Right ventricle myocardium inferior (tissue), 1 donor: ENCODE measurements at regions of chr3 and their contacts with region 1.

Region 1: DNA sequence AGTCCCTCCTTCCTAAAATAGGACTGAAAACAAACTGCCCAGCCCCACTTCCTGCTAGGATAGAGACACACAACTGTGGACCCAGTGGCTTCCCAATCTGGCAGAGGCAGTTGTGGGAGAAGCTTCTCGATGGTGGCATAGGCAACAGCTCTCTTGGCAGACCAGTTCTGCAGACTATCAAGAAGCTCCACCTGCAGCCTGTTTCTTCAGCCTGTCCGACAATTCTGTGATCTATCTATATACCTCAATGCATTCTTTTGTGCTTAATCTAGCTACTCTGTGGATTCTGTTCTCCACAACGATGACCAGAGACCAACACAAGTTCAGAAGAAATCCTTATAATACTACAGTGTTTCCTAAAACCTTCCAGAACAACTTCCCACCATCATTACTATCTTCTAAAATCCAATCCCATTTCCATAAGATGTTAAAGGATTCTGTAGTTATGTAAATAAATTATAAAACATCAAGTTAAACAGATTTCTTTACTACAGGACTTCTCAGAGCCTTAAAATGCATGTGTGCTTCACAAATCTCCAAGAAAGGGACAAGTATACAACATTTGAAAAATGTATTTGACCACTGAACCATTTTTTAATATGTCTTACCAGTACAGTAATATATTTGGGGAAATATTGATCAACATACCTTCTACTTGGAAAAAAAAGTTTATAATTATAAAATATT is 57.7 kb downstream of the IGF2BP2 start:
- DNase-seq: no peak
- ATAC-seq: no peak

Region 2: GRCh38 chr3:185659942-185660921 is 106.9 kb before region 1 on chr3:
- intact Hi-C with region 1: loop called (anchors 5 kb)
- DNase-seq: peak; percentile 87
- ATAC-seq: peak; percentile 62

Region 3: DNA sequence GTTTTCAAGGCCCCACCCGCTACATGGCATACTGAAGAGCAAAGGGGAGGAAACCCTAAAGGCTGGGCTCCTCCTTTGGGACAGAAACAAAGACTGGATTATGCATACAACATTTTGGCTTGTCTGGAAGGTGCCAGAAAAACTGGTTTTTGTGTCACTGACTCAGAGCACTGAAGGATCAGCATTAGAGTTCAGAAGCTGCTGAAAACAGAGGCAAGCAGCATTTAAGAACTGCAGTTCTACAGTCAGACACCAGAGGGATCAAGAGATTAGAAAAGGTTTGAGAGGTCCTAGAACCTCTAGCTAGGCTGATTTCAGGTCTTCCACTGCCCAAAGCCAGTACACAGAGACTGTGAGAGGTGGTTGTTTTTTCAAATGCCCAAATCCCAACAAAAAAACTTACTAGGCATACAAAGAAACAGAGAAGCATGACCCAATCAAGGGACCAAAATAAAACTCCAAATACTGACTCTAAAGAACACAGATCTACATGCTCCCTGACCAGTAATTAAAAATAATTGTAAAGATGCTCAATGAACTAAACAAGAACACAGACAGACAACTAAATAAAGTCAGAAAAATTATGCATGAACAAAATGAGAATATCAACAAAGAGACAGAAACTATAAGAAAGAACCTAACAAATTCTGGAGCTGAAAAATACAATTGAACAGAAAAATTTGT is 89.9 kb before region 1 on chr3:
- intact Hi-C with region 1: loop called (anchors 5 kb)
- DNase-seq: no peak
- ATAC-seq: no peak

Region 4: DNA sequence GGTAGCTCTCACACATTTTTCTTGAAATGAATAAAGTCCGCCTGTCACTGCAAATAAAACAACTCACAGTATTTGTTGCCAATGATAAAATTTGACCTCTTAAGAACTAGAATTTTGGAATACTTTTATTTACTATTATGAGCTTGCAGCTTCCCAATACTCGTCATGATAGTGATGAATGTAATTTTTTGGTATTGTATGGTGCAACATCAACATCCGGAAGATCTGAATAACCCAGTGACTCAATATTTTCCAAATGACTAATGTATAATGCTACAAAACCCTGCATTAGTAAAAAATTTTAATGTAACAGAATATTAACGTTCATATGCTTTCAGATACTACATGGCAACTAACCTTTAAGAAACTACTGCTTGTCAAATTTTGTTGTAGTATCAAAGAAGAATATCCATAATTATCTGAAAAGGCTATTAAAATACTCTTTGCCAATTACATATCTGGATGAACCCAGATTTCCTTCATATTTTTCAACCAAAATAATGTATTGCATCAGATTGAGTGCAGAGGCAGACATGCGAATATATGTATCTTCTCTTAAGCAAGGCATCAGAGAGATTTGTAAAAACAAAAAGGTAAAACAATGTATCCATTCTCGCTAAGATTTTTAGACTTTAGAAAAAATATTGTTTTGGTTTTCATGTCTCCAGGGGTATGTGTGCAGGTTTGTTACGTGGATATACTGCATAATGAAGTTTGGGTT is 37.6 kb before region 1 on chr3:
- intact Hi-C with region 1: no loop called
- DNase-seq: no peak
- ATAC-seq: no peak